Astrocyte of the cerebellum (primary cell): ENCODE measurements at regions of chr5 and their contacts with region 1.

Region 1: GRCh38 chr5:64612344-64612961 is 77.8 kb upstream of the SHISAL2B start:
- DNase-seq: peak; percentile 53
- H3K4me3 ChIP-seq: no peak overlapping the region
- CTCF ChIP-seq: peak; percentile 80

Region 2: GRCh38 chr5:64229163-64229774 is 383.2 kb before region 1 on chr5:
- in situ Hi-C with region 1: loop called (anchors 25 kb)
- DNase-seq: peak; percentile 13
- H3K4me3 ChIP-seq: no peak overlapping the region
- CTCF ChIP-seq: peak; percentile 41

Region 3: DNA sequence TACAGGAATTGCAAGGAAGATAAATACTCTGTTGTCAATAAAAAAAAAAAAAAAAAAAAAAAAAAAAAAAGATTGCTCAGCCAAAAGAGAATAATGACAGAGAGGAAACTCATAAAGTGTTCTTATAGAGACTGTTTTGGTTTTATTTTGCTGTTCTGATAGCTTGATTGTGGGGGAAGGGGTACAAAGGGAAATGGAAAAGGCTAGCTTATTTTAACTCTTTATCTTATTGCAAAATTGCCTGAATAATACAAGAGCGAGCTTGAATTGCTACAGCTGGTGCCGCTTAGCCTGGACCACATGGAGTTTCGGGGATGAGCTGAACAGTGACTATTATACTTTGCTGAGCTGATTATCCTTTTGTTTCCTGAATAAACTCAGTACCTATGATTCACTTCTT is 46.8 kb after region 1 on chr5:
- in situ Hi-C with region 1: no loop called
- DNase-seq: no peak
- H3K4me3 ChIP-seq: no peak overlapping the region
- CTCF ChIP-seq: no peak

Region 4: GRCh38 chr5:64680289-64680688 is 67.8 kb after region 1 on chr5:
- in situ Hi-C with region 1: no loop called
- DNase-seq: no peak
- H3K4me3 ChIP-seq: no peak overlapping the region
- CTCF ChIP-seq: no peak